Activated CD8-positive, alpha-beta memory T cell treated with anti-CD3 and anti-CD28 coated beads, Interleukin-2, amount 10 ng/mL, durations not matched to agents 7 days and 5 days (primary cell): ENCODE measurements at regions of chr17 and their contacts with region 1.

Region 1: GRCh38 chr17:77140166-77140878 is 447 bp upstream of the SEC14L1 start:
- DNase-seq: peak; percentile 100
- ATAC-seq: peak; percentile 90
- H3K4me3 Mint-ChIP-seq: peak overlapping the region; percentile 68
- H3K27ac Mint-ChIP-seq: peak overlapping the region; percentile 90
- H3K4me1 Mint-ChIP-seq: peaks cover 62% of the 10 kb centered on the region
- H3K27me3 Mint-ChIP-seq: no peaks in the 10 kb centered on the region

Region 2: DNA sequence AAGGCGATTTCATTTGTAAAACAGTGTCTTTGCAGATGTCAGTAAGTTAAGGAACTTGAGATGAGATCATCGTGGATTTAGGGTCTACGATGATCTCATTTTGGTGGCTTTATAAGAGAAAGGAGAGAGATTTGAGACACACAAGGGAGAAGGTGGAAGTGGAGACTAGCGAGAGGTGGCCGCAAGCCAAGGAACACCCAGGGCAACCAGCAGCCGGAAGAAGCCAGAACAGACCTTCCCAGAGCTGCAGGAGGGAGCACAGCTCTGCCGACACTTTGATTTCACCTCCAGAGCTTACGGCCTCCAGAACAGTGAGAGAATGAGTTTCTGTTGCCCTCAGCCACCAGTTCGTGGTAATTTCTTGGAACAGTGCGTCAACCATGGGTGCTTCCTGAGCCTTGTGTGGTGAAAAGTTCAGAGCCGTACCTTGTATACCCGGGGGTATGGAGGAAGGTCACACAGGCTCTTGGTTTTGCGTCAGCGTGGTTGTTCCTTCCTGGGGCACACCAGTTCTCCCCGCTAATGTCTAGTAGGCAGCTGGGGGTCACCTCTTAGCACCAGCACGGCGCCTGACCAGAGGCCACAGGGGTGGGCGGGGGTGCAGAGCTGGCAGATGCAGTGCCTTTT is 12.5 kb before region 1 on chr17:
- CTCF ChIA-PET with region 1: interaction called, 29 read pairs
- DNase-seq: peak; percentile 94
- ATAC-seq: peak; percentile 95
- H3K4me3 Mint-ChIP-seq: peak overlapping the region; percentile 56
- H3K27ac Mint-ChIP-seq: peak overlapping the region; percentile 92
- H3K4me1 Mint-ChIP-seq: peaks cover 51% of the 10 kb centered on the region
- H3K27me3 Mint-ChIP-seq: no peaks in the 10 kb centered on the region

Region 3: DNA sequence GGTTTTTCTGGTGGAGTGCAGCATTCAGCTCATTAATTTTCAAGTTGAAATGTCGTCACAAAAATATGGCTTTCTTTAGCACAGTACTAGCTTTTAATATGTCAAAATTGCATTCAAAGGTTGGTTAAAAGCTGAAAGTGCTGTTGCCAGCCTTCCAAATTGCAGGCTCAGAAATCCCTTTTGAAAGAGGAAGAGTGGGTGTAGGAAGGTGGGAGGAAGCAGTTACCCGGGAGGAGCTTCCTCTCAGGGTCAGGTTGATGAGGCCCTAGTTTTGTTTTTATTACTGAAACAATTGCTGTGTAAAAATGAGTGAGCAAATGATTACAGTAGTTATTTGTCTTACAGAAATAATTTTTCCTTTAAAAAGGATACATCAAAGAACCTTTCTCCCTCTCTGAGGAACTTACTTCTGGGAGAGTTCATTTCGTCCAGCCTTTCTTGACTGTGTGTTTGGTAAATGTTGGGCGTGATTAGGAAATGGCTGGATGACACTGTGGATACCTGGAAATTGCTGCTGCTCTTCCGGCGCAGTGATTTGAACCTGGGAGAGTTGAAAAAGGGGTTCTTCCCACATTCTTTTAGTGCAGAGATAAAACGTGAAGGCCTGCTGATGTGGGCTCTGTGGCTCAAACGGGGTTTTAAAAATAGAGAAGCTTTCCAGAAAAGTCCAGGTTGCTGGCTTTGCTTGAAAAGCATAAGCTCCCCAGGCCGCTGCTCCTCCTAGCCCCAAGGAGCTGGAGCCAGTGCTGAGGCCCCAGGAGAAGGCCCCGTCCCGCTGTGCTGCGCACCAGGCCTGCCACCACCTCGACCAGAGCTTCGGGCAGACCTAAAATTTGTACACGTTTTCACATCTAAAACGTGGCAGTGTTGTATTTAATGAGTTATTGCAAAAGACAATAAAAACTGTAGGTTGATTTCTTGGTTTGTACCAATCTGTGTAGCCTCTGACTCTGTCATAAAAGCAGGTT is 42.2 kb after region 1 on chr17:
- CTCF ChIA-PET with region 1: interaction called, 18 read pairs
- DNase-seq: no peak
- ATAC-seq: no peak
- H3K4me3 Mint-ChIP-seq: peak overlapping the region; percentile 26
- H3K27ac Mint-ChIP-seq: peak overlapping the region; percentile 82
- H3K4me1 Mint-ChIP-seq: peaks cover 30% of the 10 kb centered on the region
- H3K27me3 Mint-ChIP-seq: no peaks in the 10 kb centered on the region